Gastrocnemius medialis (tissue), 4 donors: ENCODE measurements at regions of chr4 and their contacts with region 1.

Region 1: DNA sequence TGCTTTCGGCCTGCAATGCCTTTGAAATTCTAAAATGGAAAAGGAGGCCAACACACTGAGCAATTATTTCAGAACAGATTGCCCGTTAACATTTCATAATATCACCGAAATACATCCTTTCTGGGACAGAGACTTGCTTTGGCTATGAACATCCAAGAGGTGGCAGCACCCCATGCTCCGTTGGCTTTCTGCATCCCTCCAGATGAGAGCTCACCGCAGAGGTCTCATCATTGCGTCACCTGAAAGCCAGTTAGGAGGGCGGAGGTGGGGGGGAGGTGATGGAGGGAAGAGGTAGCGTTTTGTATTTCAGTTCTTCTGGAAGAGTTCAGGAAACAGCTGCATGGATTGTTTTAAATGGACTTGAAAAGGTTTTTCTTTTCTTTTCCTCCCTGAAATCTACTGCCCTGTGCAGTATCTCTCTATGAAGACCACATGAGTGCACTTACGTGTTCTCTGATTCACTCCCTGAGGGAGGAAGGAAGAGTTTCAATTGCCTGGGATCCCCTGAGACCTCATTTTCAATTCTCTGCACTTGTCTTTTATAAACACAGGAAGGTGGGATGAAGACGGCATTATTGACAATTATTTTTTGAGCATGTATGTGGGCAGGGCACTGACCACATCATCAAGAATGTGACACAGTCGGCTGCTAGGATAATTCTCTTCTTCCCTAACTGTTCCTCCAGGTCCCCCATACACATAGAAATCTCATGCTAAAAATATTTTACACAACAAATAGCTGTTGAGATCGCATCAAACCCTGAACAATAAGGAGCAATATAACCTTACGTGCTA is 166.9 kb upstream of the PGRMC2 start:
- DNase-seq: peak; percentile 70 to 81
- ATAC-seq: peak; percentile 93 to 94
- H3K4me3 ChIP-seq: no peak overlapping the region
- H3K27ac ChIP-seq: peak overlapping the region in 2 of 4 donors; percentile 9
- H3K4me1 ChIP-seq: peaks cover 17 to 20% of the 10 kb centered on the region in 2 donors
- H3K27me3 ChIP-seq: no peaks in the 10 kb centered on the region
- CTCF ChIP-seq: peak; percentile 50 to 80 (median 71)
- POLR2A ChIP-seq: no peak

Region 2: DNA sequence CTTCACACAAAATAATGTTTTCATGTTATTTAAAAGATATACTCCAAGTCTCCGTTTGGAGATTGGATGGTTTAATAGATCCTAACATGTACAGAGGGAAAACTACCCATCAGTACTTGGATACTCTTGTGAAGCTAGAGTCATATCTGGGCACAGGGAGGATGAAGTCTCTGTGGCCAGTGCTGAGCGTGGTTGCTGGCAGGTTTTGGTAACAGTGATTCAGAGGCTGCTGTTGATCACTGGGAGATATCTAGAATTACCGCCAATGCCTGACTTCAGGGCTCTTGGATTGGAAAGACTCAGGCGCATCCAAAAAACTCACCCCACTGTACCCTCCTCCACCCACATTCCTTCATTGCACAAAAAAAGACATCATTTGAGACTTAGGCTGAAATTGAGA is 59.7 kb before region 1 on chr4:
- in situ Hi-C with region 1: no loop called
- intact Hi-C with region 1: loop called (anchors 5 kb)
- DNase-seq: peak; percentile 76 to 77
- ATAC-seq: peak; percentile 97 to 99
- H3K4me3 ChIP-seq: no peak overlapping the region
- H3K27ac ChIP-seq: peak overlapping the region; percentile 64 to 82 (median 74)
- H3K4me1 ChIP-seq: peaks cover 18 to 38% of the 10 kb centered on the region in 2 donors
- H3K27me3 ChIP-seq: no peaks in the 10 kb centered on the region
- CTCF ChIP-seq: no peak
- POLR2A ChIP-seq: no peak

Region 3: DNA sequence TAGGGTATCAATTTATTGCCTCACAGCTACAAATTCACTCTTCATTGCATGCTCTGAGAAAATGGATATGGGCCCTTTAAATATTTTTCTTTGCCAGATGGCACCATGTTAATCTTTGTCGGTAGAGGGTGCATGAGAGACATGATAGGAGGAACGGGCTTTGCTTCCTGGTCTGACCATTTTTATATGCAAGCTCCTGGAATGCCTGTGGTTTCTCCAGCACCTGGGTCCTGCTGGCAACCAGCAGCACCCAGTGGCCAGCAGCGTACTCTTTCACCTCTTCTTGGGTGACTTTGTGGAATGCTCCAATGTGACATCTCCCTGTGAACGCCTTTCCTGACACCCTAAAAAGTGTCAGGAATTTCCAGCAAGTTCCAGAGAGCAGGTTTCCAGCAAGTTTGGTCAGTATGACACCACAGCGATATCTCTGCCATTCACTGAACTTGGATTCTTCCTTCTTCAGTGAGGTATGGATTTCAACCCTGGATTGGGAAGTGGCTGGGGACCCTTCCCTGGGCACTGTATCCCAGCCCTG is 26.6 kb before region 1 on chr4:
- in situ Hi-C with region 1: no loop called
- intact Hi-C with region 1: no loop called
- DNase-seq: peak; percentile 16 to 42
- ATAC-seq: peak; percentile 62 to 87
- H3K4me3 ChIP-seq: no peak overlapping the region
- H3K27ac ChIP-seq: no peak overlapping the region
- H3K4me1 ChIP-seq: peaks cover 8 to 10% of the 10 kb centered on the region in 2 donors
- H3K27me3 ChIP-seq: no peaks in the 10 kb centered on the region
- CTCF ChIP-seq: peak in 3 of 5 experiments; percentile 23 to 44 (median 40)
- POLR2A ChIP-seq: no peak

Region 4: GRCh38 chr4:128528793-128529553 is 74.5 kb after region 1 on chr4:
- in situ Hi-C with region 1: no loop called
- intact Hi-C with region 1: loop called (anchors 5 kb)
- DNase-seq: peak; percentile 38 to 58
- ATAC-seq: peak; percentile 96
- H3K4me3 ChIP-seq: no peak overlapping the region
- H3K27ac ChIP-seq: peak overlapping the region in 3 of 4 donors; percentile 35 to 47 (median 35)
- H3K4me1 ChIP-seq: peaks cover 3 to 25% of the 10 kb centered on the region in 2 donors
- H3K27me3 ChIP-seq: no peaks in the 10 kb centered on the region
- CTCF ChIP-seq: no peak
- POLR2A ChIP-seq: no peak